MCF 10A (cell line): ENCODE measurements at regions of chr6 and their contacts with region 1.

Region 1: GRCh38 chr6:29649701-29650673 is 6.9 kb upstream of the MOG start:
- DNase-seq: peak; percentile 99
- H3K4me3 Mint-ChIP-seq: peak overlapping the region; percentile 88
- H3K27ac Mint-ChIP-seq: peak overlapping the region; percentile 97
- H3K4me1 Mint-ChIP-seq: peaks cover 7% of the 10 kb centered on the region
- H3K27me3 Mint-ChIP-seq: no peaks in the 10 kb centered on the region
- CTCF ChIP-seq: peak; percentile 72

Region 2: GRCh38 chr6:29564875-29565274 is 85.1 kb before region 1 on chr6:
- CTCF ChIA-PET with region 1: no interaction called
- POLR2A ChIA-PET with region 1: no interaction called
- intact Hi-C with region 1: no loop called
- DNase-seq: no peak
- H3K4me3 Mint-ChIP-seq: no peak overlapping the region
- H3K27ac Mint-ChIP-seq: no peak overlapping the region
- H3K4me1 Mint-ChIP-seq: no peaks in the 10 kb centered on the region
- H3K27me3 Mint-ChIP-seq: peaks cover 83% of the 10 kb centered on the region
- CTCF ChIP-seq: no peak

Region 3: GRCh38 chr6:29661071-29661470 is 11.1 kb after region 1 on chr6:
- CTCF ChIA-PET with region 1: interaction called, 256 read pairs
- POLR2A ChIA-PET with region 1: interaction called, 11 read pairs
- intact Hi-C with region 1: no loop called
- DNase-seq: no peak
- H3K4me3 Mint-ChIP-seq: no peak overlapping the region
- H3K27ac Mint-ChIP-seq: no peak overlapping the region
- H3K4me1 Mint-ChIP-seq: no peaks in the 10 kb centered on the region
- H3K27me3 Mint-ChIP-seq: no peaks in the 10 kb centered on the region
- CTCF ChIP-seq: no peak

Region 4: DNA sequence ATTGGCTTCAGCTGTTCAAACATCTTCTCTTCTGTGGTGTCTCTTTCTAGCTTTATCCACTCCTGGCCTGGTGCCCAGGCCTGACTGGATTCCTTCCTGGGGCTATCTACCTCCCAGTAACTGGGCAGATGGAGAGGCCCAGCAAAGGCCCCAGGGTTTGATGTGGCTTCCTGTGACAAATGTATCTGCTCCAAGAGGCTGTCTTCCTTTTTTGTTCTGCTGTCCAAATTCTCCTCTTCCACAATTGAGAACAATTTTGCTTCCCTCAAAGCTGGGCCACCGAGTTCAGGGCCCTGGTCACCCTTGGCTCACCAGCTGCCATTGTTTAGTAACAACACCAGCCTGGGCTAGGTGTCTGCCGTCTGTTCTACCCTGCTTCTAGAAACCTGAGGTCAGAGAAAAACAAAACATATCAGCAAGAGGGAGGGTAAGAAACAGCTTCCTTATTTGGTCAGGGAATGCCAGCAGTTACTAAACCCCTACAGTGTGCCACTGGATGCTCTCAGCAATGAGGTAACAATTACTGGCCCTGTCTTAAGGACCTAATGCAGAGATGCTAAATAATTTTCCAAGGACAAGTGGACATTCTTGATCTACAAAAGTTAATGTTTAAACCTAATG is 27.1 kb after region 1 on chr6:
- CTCF ChIA-PET with region 1: interaction called, 202 read pairs
- POLR2A ChIA-PET with region 1: interaction called, 3 read pairs
- intact Hi-C with region 1: no loop called
- DNase-seq: peak; percentile 51
- H3K4me3 Mint-ChIP-seq: no peak overlapping the region
- H3K27ac Mint-ChIP-seq: peak overlapping the region; percentile 97
- H3K4me1 Mint-ChIP-seq: peaks cover 24% of the 10 kb centered on the region
- H3K27me3 Mint-ChIP-seq: no peaks in the 10 kb centered on the region
- CTCF ChIP-seq: no peak

Region 5: GRCh38 chr6:29696155-29697125 is 46.5 kb after region 1 on chr6:
- CTCF ChIA-PET with region 1: interaction called, 369 read pairs
- POLR2A ChIA-PET with region 1: interaction called, 20 read pairs
- intact Hi-C with region 1: loop called (anchors 1 kb)
- DNase-seq: peak; percentile 57
- H3K4me3 Mint-ChIP-seq: no peak overlapping the region
- H3K27ac Mint-ChIP-seq: no peak overlapping the region
- H3K4me1 Mint-ChIP-seq: no peaks in the 10 kb centered on the region
- H3K27me3 Mint-ChIP-seq: no peaks in the 10 kb centered on the region
- CTCF ChIP-seq: peak; percentile 64

Region 6: GRCh38 chr6:29724937-29725869 is 75.2 kb after region 1 on chr6:
- CTCF ChIA-PET with region 1: interaction called, 18 read pairs
- POLR2A ChIA-PET with region 1: interaction called, 3 read pairs
- intact Hi-C with region 1: no loop called
- DNase-seq: no peak
- H3K4me3 Mint-ChIP-seq: peak overlapping the region; percentile 79
- H3K27ac Mint-ChIP-seq: no peak overlapping the region
- H3K4me1 Mint-ChIP-seq: peaks cover 5% of the 10 kb centered on the region
- H3K27me3 Mint-ChIP-seq: no peaks in the 10 kb centered on the region
- CTCF ChIP-seq: no peak

Region 7: GRCh38 chr6:29847871-29848630 is 198.1 kb after region 1 on chr6:
- CTCF ChIA-PET with region 1: interaction called, 6 read pairs
- POLR2A ChIA-PET with region 1: no interaction called
- intact Hi-C with region 1: loop called (anchors 5 kb)
- DNase-seq: peak; percentile 69
- H3K4me3 Mint-ChIP-seq: no peak overlapping the region
- H3K27ac Mint-ChIP-seq: no peak overlapping the region
- H3K4me1 Mint-ChIP-seq: peaks cover 13% of the 10 kb centered on the region
- H3K27me3 Mint-ChIP-seq: peaks cover 6% of the 10 kb centered on the region
- CTCF ChIP-seq: peak; percentile 97